Left cardiac atrium (tissue), 4 donors: ENCODE measurements at regions of chr4 and their contacts with region 1.

Region 1: GRCh38 chr4:105461221-105461620 is 12.6 kb downstream of the PPA2 start:
- DNase-seq: no peak
- ATAC-seq: no peak

Region 2: DNA sequence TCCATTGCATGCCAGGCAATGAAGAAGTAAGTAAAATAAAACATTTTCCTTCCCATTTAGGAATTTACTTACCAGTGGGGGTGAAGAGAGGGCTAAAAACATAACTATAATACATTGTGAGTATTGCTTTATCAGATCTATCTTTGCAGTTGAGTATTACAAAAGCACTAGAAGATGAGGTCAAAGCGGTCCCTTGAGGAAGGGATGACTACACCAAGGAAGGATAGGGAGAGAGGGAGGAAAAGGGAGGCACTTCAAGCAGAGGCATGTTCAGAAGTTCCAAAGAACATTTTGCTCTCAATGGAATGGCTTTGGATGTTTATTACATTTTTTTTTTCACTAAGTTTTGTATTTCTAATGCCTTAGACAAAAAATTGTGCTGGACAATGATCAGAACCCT is 186.7 kb before region 1 on chr4:
- intact Hi-C with region 1: loop called in 1 of 2 experiments (anchors 10 kb)
- DNase-seq: no peak
- ATAC-seq: no peak